Transverse colon (tissue), 4 donors: ENCODE measurements at regions of chr20 and their contacts with region 1.

Region 1: DNA sequence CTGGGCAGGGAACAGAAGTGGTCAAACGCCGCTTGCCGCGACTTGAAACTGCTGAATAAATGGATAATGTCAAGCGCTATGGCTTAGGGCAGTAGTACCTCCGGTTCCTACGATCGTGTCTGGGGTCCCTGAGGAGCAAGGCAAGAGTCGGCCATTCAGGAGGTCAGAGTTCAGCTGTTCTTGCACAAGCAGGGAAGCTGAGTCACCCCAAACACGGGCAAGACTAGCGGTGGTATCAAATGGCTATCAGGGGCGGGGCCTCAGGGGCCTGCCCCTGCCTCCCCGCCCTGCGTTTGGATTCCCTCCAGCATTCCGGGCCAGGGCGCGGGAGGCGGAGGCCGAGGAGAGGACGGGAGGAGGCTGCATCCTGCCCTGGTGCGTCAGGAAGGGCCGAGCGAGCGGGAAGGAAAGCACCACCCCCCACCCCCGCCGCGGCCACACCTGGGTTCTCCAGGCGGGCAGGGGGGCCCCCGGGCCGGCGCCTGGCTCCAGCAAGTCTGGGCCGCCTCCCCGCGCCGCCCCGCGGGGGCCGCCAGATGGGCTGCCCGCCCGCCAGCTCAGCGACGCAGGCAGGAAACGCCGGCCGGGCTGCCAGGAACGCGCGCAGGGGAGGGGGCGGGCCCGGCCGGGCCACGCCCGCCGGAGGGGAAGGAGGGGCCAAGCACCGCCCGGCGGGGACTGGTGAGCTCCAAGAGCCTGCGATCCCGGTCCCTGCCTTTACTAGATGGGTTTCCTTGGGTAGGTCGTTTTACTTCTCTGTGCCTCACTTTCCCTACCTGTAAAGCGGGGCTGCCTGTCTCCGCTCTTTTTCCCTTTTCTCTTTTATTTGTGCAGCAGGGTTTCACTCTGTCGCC is 32.2 kb upstream of the ID1 start:
- DNase-seq: peak; percentile 96
- H3K4me3 ChIP-seq: peak overlapping the region; percentile 44 to 60 (median 48)
- H3K27ac ChIP-seq: peak overlapping the region; percentile 94 to 97 (median 95)
- H3K4me1 ChIP-seq: peaks cover 5 to 49% (median 27%) of the 10 kb centered on the region in 4 donors
- H3K27me3 ChIP-seq: no peaks in the 10 kb centered on the region
- CTCF ChIP-seq: peak in 1 of 5 experiments; percentile 10
- EP300 ChIP-seq: peak; percentile 67
- POLR2A ChIP-seq: peak; percentile 77

Region 2: DNA sequence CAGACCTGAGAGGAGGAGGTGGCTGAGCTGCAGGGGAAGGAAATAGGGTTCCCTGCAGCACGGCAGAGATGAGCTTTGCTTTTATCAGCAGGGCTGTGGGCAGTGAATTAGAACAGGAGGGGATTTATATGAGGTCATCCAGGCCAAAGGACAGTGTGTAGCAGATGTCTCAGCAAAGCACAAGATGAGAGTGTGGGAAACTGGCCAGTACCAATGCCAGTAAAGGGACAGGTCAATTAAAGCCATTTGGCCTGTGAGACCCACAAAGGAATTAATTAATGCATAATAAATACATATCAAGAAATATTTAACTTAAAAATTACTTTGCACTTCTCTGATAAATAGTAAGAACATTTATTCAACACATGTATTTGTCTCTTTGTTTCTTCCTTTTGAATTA is 182.4 kb before region 1 on chr20 and contains the start of gene DEFB119:
- in situ Hi-C with region 1: no loop called
- intact Hi-C with region 1: no loop called
- DNase-seq: no peak
- H3K4me3 ChIP-seq: no peak within 1 kb of the TSS
- H3K27ac ChIP-seq: no peak within 1 kb of the TSS
- H3K4me1 ChIP-seq: no peaks in the 10 kb centered on the region
- H3K27me3 ChIP-seq: no peaks in the 10 kb centered on the region
- CTCF ChIP-seq: no peak
- EP300 ChIP-seq: no peak
- POLR2A ChIP-seq: no peak
- total RNA-seq, gene DEFB119: not detected

Region 3: GRCh38 chr20:31738729-31739561 is 166.0 kb after region 1 on chr20 and contains the start of gene TPX2:
- in situ Hi-C with region 1: loop called in 1 of 4 experiments (anchors 25 kb)
- intact Hi-C with region 1: no loop called
- DNase-seq: peak; percentile 95
- H3K4me3 ChIP-seq: peak within 1 kb of the TSS; percentile 23 to 81 (median 58)
- H3K27ac ChIP-seq: peak within 1 kb of the TSS; percentile 84 to 86 (median 84)
- H3K4me1 ChIP-seq: peaks cover 0 to 20% (median 14%) of the 10 kb centered on the region in 4 donors
- H3K27me3 ChIP-seq: no peaks in the 10 kb centered on the region
- CTCF ChIP-seq: peak in 3 of 5 experiments; percentile 15 to 51 (median 42)
- EP300 ChIP-seq: no peak
- POLR2A ChIP-seq: peak; percentile 51
- total RNA-seq, gene TPX2: 3.2 to 15.7 (median 7.8) TPM